ENCODE measurements at regions of chr7 and their contacts with region 1.

Region 1: GRCh38 chr7:100049441-100050311 is at the start of gene ZSCAN21:
- DNase-seq: peak; percentile 85 to 89 (median 86)
- H3K4me3 ChIP-seq: peak within 1 kb of the TSS; percentile 82 to 98 (median 93)
- H3K27ac ChIP-seq: peak within 1 kb of the TSS; percentile 82 to 94
- H3K4me1 ChIP-seq: peaks cover 0 to 20% (median 15%) of the 10 kb centered on the region in 4 experiments
- H3K27me3 ChIP-seq: no peaks in the 10 kb centered on the region

Region 2: GRCh38 chr7:99918959-99919813 is 130.5 kb before region 1 on chr7 and contains the start of gene TRIM4:
- CTCF ChIA-PET with region 1: interaction called, 26 read pairs
- POLR2A ChIA-PET with region 1: no interaction called
- DNase-seq: peak; percentile 86 to 95 (median 94)
- H3K4me3 ChIP-seq: peak within 1 kb of the TSS; percentile 62 to 96 (median 86)
- H3K27ac ChIP-seq: peak within 1 kb of the TSS; percentile 77 to 90
- H3K4me1 ChIP-seq: peaks cover 11 to 33% (median 16%) of the 10 kb centered on the region in 4 experiments
- H3K27me3 ChIP-seq: no peaks in the 10 kb centered on the region

Region 3: DNA sequence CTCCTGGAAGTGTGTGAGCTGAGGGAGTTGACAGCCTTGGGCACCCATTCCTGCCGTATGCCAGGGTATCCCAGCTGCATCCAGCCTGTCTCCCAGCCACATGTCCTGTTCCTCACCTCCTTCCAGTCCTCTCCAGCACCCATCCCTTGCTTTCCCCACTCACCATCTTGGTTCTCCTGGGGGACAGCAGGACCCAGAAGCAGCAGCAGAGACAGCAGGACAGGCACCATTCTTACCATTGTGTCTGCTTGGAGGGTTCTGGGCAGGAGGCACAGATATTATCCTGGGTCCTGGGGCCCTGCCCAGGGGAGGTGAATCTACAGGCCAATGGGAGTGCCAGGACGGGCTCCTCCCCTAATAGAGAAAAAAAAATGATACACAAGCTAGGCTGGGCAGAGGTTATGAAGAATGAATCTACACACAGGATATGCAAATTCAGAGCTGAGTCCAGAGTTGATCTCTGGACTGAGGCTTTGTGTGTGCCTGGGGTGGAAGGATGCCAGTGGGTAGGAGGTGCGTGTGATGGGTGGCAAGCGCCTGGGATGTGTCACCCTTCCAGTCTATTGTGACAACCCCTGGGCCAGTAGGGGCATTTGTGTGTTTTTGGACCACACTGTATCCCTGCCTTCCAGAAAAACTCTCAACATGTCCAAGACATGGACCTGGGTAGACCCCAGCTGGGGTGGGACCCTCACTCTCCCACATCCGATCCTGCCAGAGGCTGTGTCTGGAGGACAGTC is 73.7 kb before region 1 on chr7 and contains the start of gene AZGP1:
- CTCF ChIA-PET with region 1: interaction called, 33 read pairs
- POLR2A ChIA-PET with region 1: no interaction called
- DNase-seq: peak in 1 of 3 donors; percentile 16
- H3K4me3 ChIP-seq: no peak within 1 kb of the TSS
- H3K27ac ChIP-seq: no peak within 1 kb of the TSS
- H3K4me1 ChIP-seq: no peaks in the 10 kb centered on the region
- H3K27me3 ChIP-seq: peaks cover 0 to 5% (median 0%) of the 10 kb centered on the region in 5 experiments

Region 4: DNA sequence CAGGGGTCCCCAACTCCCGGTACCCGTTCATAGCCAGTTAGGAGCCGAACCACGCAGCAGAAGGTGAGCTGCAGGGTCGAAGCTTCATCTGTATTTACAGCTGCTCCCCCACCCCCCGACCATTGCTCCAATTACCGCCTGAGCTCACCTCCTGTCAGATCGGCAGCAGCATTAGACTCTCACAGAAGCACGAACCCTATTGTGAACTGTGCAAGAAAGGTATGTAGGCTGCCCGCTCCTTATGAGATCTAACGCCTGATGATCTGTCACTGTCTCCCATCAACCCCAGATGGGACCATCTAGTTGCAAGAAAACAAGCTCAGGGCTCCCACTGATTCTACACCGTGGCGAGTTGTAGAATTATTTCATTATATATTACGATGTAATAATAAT is 59.2 kb before region 1 on chr7:
- CTCF ChIA-PET with region 1: interaction called, 258 read pairs
- POLR2A ChIA-PET with region 1: interaction called, 8 read pairs
- DNase-seq: no peak
- H3K4me3 ChIP-seq: peak overlapping the region in 1 of 7 experiments; percentile 11
- H3K27ac ChIP-seq: no peak overlapping the region
- H3K4me1 ChIP-seq: peaks cover 0 to 14% (median 3%) of the 10 kb centered on the region in 4 experiments
- H3K27me3 ChIP-seq: peaks cover 0 to 2% (median 0%) of the 10 kb centered on the region in 5 experiments

Region 5: GRCh38 chr7:99997545-99998137 is 52.0 kb before region 1 on chr7:
- CTCF ChIA-PET with region 1: interaction called, 258 read pairs
- POLR2A ChIA-PET with region 1: interaction called, 8 read pairs
- DNase-seq: peak; percentile 82 to 93 (median 92)
- H3K4me3 ChIP-seq: peak overlapping the region; percentile 39 to 80 (median 66)
- H3K27ac ChIP-seq: peak overlapping the region; percentile 68 to 82
- H3K4me1 ChIP-seq: peaks cover 0 to 27% (median 13%) of the 10 kb centered on the region in 4 experiments
- H3K27me3 ChIP-seq: no peaks in the 10 kb centered on the region

Region 6: DNA sequence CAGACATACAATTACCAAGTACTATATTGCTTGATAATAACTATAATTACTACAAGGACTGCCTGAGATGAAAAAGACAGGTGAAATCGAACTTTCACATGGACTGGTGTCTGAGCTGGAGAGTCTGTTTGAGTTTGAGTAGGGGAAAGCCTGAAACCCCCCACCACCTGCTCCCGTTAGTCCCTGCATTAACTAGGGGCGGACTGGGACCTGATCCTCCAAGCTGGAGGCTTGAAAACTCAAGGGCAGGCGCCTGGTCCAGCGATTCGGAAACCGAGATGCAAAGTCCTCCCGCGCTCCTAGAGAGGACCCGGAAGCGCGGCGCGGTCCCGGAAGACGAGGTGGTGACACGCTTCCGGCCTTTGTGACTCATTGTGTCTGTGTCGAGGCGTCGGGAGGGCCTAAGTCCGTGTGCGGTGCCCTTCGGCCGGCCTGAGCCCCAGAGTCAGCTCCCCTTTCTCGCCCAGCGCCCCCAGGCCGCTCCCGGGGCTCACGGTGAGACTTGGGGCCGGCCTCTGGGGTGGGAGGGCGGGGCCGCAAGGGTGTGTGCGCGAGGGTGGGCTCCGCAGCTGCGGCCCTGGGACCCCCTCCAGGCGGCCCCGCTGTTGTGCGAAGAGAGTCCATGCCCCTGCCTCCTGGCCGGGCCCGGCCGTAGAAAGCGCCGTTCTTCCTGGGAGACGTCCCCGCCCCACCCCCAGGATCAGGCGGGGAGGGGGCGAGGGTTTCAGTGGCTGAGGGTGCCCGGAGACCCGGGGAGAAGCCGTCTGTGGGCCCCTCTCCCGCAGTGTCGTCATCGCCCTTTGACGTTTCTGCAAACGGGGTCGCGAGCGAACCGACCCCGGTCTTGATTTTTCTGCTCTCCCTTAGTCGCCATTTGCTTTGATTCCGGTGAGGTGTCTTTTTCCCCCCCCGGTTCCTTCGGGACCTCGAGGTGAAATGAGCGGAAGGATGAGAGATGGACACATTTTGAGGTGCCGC is 34.2 kb before region 1 on chr7 and contains the start of gene ZKSCAN1:
- CTCF ChIA-PET with region 1: interaction called, 19 read pairs
- POLR2A ChIA-PET with region 1: interaction called, 6 read pairs
- DNase-seq: peak; percentile 94 to 97 (median 97)
- H3K4me3 ChIP-seq: peak within 1 kb of the TSS; percentile 68 to 97 (median 93)
- H3K27ac ChIP-seq: peak within 1 kb of the TSS; percentile 98 to 99
- H3K4me1 ChIP-seq: peaks cover 4 to 42% (median 20%) of the 10 kb centered on the region in 4 experiments
- H3K27me3 ChIP-seq: no peaks in the 10 kb centered on the region

Region 7: GRCh38 chr7:100022665-100023064 is 27.0 kb before region 1 on chr7:
- CTCF ChIA-PET with region 1: interaction called, 19 read pairs
- POLR2A ChIA-PET with region 1: interaction called, 4 read pairs
- DNase-seq: no peak
- H3K4me3 ChIP-seq: no peak overlapping the region
- H3K27ac ChIP-seq: peak overlapping the region in 1 of 2 experiments; percentile 39
- H3K4me1 ChIP-seq: peaks cover 0 to 17% (median 6%) of the 10 kb centered on the region in 4 experiments
- H3K27me3 ChIP-seq: no peaks in the 10 kb centered on the region

Region 8: DNA sequence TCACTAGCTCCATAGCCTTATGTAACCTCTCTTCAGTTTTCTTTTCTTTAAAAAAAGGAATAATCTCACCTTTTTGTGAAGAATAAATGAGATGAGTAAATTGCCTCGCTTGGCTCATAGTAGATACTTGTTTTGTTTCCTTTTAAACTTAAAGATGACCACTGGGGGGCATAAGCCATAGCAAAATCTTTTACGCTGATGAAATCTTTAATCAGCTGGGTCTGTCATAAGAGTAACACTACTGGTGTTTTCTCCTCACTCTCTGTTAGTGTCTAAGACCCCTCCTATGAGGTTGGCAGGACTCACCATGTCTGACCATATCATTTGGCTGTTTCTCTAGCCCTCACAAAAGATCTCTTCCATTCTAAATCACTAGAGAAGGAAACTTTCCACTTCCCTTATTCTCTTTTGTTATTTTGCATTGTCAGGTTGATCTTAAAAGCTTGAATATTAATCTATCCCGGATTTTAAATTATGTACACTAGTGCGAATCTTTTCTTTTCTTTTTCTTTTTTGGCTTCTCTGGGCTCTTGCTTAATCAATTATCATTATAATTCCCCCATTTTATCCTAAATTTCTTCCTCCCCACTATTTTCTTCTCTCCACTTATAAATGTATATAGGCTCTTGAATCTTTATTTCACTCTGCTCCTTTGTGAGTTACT is 140.5 kb after region 1 on chr7:
- CTCF ChIA-PET with region 1: no interaction called
- POLR2A ChIA-PET with region 1: no interaction called
- DNase-seq: peak; percentile 40 to 57 (median 51)
- H3K4me3 ChIP-seq: peak overlapping the region in 1 of 7 experiments; percentile 16
- H3K27ac ChIP-seq: no peak overlapping the region
- H3K4me1 ChIP-seq: peaks cover 0 to 14% (median 3%) of the 10 kb centered on the region in 4 experiments
- H3K27me3 ChIP-seq: no peaks in the 10 kb centered on the region

Measured in common myeloid progenitor, CD34-positive (primary cell).